HEK293 (cell line): ENCODE measurements at regions of chr20 and their contacts with region 1.

Region 1: DNA sequence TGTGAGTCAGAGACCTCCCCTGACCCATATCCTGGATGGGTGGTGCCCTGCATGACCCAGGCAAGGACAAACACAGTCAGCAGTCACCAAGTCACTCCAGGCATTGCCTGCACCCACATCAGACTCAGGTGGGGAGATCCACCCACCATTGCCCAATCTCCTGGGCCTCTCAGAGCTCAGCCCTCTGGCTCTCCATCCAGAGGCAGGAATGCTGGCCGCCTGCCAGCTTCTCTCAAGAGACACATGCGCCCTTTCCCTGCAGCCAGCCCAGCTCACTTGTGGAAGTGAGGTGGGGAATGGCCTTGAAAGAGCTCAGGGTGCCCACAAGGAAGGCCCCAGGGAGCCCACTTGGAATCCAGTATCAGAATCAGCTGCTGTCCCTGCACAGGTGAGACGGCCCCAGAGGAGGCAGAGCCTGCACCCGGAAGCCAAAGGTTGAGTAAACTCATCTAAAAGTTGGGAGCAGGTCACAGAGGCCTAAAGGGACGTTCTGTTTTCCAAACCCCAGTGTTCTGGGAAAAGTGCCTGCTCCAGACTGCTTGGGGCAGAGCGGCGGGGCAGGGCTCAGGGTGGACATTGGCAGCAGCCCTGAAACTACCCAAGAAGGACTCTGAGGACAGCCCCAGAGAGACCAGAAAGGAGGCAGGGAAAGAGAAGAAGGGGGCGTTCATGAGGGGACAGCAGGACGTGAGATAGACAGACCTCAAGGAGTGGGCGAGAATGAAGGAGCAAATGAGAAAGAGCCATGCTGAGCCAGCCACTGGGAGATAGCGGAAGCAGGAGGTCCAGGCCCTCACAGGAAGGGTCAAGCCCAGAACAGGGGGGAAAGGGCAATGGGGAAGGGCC is 129.7 kb downstream of the PREX1 start:
- H3K4me3 ChIP-seq: no peak overlapping the region
- H3K27ac ChIP-seq: no peak overlapping the region; the same call in 1 of the 2 replicates
- H3K4me1 ChIP-seq: peaks cover 7% of the 10 kb centered on the region
- CTCF ChIP-seq: no peak

Region 2: GRCh38 chr20:48012197-48013085 is 685.7 kb before region 1 on chr20:
- CTCF ChIA-PET with region 1: no interaction called
- POLR2A ChIA-PET with region 1: no interaction called
- H3K4me3 ChIP-seq: no peak overlapping the region
- H3K27ac ChIP-seq: no peak overlapping the region
- H3K4me1 ChIP-seq: no peaks in the 10 kb centered on the region
- CTCF ChIP-seq: no peak

Region 3: DNA sequence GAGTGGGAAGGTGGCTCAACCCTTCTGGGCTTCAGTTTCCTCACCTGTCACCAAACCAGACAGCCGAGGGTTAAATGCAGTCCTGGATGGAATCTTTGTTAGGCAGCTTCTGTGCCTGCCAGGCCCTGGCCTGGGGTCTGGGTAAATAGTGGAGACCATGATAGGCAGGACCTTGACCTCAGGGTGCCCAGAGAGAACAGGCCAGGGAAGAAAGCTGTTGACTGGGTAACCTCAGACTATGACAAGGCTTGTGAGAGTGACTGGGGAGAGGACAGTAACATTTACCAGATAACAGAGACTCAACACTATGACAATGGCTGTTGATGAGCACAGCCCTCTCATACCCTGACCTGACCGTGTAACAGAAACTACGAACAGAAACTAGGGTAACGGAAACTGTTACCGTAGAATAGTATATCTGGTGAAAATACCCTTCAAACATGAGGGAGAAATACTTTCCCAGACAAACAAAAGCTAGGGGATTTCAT is 88.6 kb before region 1 on chr20:
- CTCF ChIA-PET with region 1: no interaction called
- POLR2A ChIA-PET with region 1: no interaction called
- H3K4me3 ChIP-seq: no peak overlapping the region
- H3K27ac ChIP-seq: no peak overlapping the region
- H3K4me1 ChIP-seq: no peaks in the 10 kb centered on the region
- CTCF ChIP-seq: no peak

Region 4: DNA sequence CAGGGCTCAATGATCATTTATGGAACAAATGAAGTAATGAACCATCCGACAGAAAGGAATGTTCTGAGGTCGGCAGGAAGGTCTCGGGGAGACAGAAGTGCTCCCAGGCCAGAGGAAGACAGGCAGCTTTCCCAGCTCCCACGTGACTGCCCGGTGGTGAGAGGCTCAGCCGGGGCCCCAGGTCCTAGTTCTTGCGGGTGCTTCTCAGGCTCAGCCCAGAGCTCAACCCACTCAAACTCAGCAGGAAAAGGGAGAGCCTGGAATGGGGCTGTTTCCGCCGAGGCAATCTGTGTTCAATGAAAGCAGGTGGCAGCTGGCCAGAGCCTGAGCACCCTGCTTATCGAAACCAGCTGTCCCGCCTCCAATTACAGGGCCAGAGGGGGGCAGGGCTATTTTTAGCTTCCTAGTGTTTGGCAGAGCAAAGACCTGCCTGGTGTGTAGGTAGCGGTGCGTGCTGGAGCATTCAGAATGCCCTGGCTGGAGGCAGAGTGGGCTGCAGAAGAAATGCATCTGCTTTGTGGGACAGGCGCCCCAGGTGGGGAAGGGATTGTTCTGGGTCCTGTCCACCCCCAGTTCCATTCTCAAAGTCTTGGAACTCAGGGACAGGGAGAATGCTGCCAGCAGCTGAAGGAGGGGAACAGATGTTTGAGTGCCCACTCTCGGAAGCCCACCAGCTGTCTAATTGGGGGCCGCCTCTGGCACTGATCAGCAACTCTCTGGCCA is 15.4 kb before region 1 on chr20:
- CTCF ChIA-PET with region 1: interaction called, 12 read pairs
- POLR2A ChIA-PET with region 1: interaction called, 3 read pairs
- H3K4me3 ChIP-seq: peak overlapping the region; percentile 1; the same call in 1 of the 2 replicates
- H3K27ac ChIP-seq: peak overlapping the region; percentile 50; the same call in 1 of the 2 replicates
- H3K4me1 ChIP-seq: peaks cover 12% of the 10 kb centered on the region
- CTCF ChIP-seq: no peak